ENCODE measurements at regions of chr7 and their contacts with region 1.

Region 1: GRCh38 chr7:132318352-132319318 is 257.6 kb downstream of the PLXNA4 start:
- DNase-seq: peak; percentile 82
- H3K4me3 ChIP-seq: no peak overlapping the region
- H3K27ac ChIP-seq: no peak overlapping the region
- H3K4me1 ChIP-seq: peaks cover 3% of the 10 kb centered on the region
- H3K27me3 ChIP-seq: no peaks in the 10 kb centered on the region
- CTCF ChIP-seq: peak; percentile 88 to 90 (median 90)
- POLR2A ChIP-seq: no peak

Region 2: DNA sequence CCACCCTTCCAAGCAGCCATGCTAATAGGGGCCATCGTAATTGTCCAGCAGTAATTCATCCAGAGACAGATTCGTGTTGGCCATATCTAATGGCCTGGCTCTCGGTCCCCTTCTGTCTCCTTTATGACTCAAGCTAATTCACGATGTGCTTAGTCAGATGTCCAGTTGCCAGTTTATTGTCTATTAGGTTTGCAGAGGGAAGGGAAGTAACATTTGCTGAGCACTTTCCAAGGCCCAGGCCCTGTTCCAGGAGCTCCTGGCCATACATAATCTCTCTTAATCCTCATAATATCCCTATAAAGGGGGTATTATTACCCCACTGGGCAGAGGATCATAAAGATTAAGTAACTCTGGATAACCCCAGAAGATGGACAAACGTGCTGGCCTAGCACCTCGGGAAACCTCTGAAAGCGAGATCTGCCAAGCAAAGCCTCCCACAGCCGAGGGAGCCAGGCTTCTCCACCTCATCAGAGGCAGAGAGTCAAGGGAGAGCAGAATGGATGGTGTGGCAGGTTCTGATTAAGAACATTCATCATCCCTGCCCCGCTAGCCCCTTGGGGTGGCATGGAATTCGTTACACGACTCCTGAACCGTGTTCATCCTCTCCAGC is 104.0 kb after region 1 on chr7:
- intact Hi-C with region 1: loop called (anchors 5 kb)
- DNase-seq: no peak
- H3K4me3 ChIP-seq: no peak overlapping the region
- H3K27ac ChIP-seq: no peak overlapping the region
- H3K4me1 ChIP-seq: no peaks in the 10 kb centered on the region
- H3K27me3 ChIP-seq: no peaks in the 10 kb centered on the region
- CTCF ChIP-seq: no peak
- POLR2A ChIP-seq: no peak

Measured in prostate gland (tissue), 2 donors.